ENCODE measurements at regions of chr20 and their contacts with region 1.

Region 1: DNA sequence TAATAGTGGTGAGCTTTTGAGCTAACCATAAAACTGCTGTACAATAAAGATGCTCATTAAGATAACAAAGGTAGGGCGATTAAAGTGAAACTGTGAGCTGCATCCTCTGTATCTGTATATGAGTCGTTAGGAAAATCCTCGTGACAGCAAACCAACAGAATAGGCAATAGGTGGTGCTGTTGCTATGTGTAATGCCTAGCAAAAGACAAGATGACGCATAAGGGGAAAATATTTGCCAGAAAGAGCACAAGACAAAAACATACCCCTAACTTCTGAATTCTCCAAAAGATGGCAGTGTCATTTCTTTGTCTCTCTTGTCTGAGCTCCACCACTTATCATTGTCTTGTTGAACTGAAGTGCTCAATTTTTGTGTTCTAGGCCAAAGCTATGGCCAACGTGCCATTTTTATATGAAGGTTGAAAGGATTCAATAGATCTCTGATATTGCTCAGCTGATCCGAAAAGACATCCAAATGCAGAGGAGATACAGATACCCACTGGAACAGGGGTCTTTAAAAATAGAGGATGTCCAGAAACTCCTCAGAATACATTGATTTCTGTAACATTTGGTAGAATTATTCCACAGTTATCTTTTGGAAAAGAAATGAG is 56.3 kb upstream of the ANKEF1 start:
- DNase-seq: no peak
- ATAC-seq: peak; percentile 81

Region 2: GRCh38 chr20:9573335-9574121 is 405.0 kb before region 1 on chr20:
- intact Hi-C with region 1: no loop called
- DNase-seq: no peak
- ATAC-seq: no peak

Region 3: GRCh38 chr20:9942736-9943135 is 35.8 kb before region 1 on chr20:
- intact Hi-C with region 1: no loop called
- DNase-seq: no peak
- ATAC-seq: no peak

Region 4: DNA sequence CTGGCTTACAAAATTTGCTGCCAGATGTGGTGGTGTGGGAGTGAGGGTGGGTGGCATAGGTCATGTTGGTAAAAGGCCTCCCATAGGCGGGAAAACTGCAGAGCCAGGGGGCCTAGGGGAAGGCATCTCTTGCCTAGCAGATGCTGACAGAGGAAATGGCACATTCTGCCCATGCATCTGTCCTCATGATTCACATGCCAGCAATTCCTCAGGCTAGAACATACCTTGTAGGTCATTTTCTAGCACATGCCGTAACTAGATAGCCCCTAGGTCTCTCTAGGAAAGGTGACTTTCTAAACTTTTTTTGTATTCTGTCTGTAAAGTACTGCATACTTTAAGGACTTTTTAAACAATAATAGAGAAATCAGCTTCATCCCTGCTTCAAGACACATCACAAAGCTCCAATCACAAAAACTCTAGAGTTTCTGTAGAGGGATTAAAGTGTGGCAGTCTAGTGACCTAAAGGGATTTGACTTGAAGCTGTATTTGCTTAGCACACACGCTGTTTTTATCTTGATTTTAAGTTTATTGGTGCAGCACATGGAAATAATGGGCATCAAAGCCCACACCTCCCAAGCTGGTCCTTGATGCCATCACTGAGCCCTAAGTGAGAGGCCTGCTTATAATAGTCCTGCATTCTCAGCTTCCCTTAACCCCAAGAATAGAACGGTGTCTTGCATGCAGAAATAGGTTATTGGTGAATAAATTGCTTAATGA is 111.5 kb after region 1 on chr20:
- intact Hi-C with region 1: loop called (anchors 5 kb)
- DNase-seq: no peak
- ATAC-seq: no peak

Region 5: DNA sequence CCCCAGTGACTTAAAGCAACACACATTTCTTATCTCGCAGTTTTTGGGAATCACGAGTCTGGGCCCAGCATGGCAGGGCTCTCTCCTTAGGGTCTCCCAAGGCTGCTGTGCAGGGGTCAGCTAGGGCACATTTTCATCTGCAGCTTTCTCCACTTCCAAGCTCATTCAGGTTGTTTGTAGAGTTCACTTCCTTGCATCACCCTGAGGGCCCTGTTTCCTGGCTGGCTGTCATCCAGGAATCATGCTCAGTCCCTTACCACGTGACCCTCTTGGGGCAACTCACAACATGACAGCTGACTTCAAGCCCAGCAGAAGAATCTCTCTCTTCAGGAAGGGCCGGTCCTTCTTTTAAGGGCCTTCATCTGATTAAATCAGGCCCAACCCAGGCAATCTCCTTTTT is 261.5 kb after region 1 on chr20:
- intact Hi-C with region 1: no loop called
- DNase-seq: no peak
- ATAC-seq: no peak

Region 6: DNA sequence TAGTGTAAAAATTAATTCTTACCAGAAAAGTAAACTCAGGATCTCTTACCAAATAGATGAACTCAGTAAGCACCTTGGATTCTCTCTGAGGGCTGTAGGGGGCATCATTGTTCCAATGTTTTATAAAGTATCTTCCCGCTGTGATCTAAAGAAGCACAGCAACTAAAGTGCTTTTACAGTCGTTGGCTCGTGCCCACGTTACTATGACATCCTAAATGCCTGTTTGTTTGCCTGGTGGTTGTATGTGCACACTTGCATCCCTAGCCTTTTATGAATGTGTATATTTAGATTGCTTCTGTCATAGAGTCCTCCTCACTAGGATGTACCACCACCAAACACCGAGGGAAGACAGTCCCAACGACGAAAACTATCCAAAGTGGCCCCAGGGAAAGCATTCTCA is 491.1 kb after region 1 on chr20:
- intact Hi-C with region 1: no loop called
- DNase-seq: no peak
- ATAC-seq: peak; percentile 78